MCF 10A (cell line): ENCODE measurements at regions of chr13 and their contacts with region 1.

Region 1: DNA sequence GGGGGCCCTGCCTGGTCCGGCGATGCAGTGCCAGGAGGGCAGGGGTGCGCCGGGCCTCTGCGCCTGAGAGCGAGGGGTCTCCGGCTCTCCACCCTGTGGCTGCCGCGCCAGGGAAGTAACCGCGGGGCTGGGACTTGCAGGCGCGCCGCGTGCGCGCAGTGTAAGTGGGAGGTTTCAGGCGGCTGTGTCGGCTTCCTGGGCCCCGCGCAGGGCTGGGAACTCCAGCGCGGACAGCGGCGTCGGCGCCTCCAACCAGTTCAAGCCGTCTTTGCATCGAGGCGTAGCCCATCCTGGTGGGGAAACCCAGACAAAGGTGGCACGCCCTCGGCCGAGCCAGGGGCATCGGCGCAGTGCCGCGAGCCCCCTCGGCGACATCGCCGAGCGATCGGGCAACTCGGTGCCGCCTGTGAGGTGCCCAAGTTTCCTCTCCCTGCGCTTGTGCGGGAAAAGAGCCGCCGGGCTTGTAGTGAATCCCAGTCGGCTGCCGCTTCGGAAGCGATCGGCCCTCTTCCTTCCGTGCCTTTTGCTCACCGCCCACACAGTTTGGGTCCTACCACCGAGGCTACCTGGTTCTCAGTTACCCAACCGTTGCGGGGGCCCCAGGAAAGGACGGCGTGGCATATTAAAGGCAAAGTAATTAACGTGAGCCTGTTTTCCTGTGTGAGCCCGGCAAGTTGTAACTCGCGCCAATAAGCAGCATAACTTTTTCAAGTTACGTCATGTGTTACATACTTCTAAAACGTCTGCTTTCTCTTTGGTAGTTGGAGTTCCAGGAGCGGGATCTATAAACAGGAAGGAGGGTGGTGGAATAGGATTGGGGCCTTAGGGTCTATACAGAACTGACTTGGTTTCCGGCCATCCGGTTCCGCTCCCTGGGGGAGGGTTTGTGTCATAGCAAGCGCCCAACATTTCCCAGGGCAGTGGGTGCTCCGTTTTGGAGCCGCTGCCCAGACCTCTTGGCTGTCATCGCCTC is 1.2 kb downstream of the LRCH1 start:
- DNase-seq: peak; percentile 81
- H3K4me3 Mint-ChIP-seq: peak overlapping the region; percentile 74
- H3K27ac Mint-ChIP-seq: peak overlapping the region; percentile 82
- H3K4me1 Mint-ChIP-seq: peaks cover 28% of the 10 kb centered on the region
- H3K27me3 Mint-ChIP-seq: no peaks in the 10 kb centered on the region
- CTCF ChIP-seq: no peak

Region 2: GRCh38 chr13:45925151-45925550 is 629.0 kb before region 1 on chr13:
- CTCF ChIA-PET with region 1: no interaction called
- POLR2A ChIA-PET with region 1: no interaction called
- intact Hi-C with region 1: no loop called
- DNase-seq: peak; percentile 13
- H3K4me3 Mint-ChIP-seq: no peak overlapping the region
- H3K27ac Mint-ChIP-seq: no peak overlapping the region
- H3K4me1 Mint-ChIP-seq: peaks cover 6% of the 10 kb centered on the region
- H3K27me3 Mint-ChIP-seq: peaks cover 50% of the 10 kb centered on the region
- CTCF ChIP-seq: no peak

Region 3: DNA sequence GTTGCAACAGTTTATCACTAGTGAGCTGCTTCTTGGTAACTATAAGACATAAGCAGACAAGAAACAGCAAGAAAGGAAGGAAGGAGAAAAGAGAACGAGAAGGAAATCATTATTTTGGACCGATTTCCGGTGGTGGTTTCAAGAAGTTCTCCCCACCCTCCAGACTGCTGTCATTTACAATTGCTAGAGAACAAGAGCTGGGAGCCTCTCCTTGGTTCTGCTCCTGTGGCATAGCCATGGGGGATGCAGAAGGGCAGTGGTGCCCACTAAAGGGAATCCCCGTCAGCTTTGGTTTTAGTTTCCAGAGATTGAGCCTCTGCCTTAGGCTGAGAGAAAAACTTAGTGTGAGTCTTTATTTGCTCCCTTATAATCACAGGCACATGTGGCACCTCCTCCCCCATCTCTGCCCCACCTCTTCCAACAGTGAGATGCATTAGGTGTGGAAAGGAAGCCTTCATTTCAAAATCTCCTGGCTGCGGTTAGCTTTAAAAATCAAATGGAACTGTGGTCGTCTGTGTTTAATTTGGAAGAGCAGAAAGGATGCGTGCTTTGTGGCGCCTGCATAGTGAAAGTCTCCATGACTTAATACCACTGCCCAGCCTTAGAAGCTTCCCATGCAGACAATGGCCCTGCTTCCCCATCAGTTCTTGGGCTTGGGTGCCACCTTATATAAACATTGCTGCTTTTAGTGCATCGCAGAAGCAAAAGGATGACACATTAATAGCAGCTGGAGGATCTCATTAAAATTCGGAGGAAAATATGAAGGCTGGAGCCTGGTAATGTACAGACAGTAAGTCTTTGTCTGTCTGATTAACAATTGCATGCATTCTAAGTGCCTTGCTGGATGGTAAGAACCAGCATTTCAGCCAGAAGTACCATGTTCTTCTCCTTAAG is 23.8 kb after region 1 on chr13:
- CTCF ChIA-PET with region 1: interaction called, 8 read pairs
- POLR2A ChIA-PET with region 1: interaction called, 14 read pairs
- intact Hi-C with region 1: no loop called
- DNase-seq: no peak
- H3K4me3 Mint-ChIP-seq: no peak overlapping the region
- H3K27ac Mint-ChIP-seq: no peak overlapping the region
- H3K4me1 Mint-ChIP-seq: peaks cover 28% of the 10 kb centered on the region
- H3K27me3 Mint-ChIP-seq: no peaks in the 10 kb centered on the region
- CTCF ChIP-seq: no peak

Region 4: DNA sequence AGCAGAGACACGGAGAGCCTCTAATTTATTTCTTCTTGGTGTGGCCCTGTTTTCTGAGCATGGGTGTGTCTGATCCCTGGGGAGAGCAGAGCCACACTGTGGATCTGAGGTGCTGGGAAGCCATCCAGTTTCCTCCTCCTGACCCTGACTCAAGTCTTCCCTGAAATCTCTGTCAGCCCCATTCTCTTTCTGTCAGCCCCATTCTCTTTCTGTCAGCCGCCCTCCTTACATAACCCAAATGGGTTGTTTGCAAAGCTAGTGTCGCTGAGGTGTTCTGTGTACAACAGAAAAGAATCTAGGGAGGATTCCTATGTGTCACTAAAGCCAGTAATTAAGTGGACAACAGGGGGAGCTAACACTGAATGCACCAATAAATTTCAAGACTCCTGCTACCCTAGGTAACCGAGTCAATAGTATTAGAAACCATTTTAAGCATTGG is 49.0 kb after region 1 on chr13:
- CTCF ChIA-PET with region 1: interaction called, 13 read pairs
- POLR2A ChIA-PET with region 1: interaction called, 9 read pairs
- intact Hi-C with region 1: no loop called
- DNase-seq: peak; percentile 29
- H3K4me3 Mint-ChIP-seq: no peak overlapping the region
- H3K27ac Mint-ChIP-seq: peak overlapping the region; percentile 75
- H3K4me1 Mint-ChIP-seq: peaks cover 46% of the 10 kb centered on the region
- H3K27me3 Mint-ChIP-seq: no peaks in the 10 kb centered on the region
- CTCF ChIP-seq: no peak

Region 5: DNA sequence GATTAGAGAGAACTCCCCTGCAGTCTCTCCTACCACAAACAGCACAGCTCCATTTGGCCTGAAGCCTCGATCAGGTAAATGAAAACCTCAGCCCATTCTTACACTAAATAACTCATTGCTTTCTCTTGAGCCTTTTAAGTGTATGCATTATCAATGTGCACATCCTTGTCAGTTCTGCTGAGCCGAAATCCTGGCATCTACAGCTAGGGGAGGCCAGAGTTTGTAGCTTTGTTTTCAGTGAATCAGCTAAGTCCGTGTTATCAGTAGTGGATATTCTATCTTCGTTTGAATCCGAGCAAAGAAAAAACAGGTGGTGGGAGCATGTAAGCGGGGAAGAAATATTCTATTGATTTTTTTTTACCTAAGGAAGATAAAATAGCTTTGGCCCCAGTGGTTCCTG is 158.4 kb after region 1 on chr13:
- CTCF ChIA-PET with region 1: interaction called, 57 read pairs
- POLR2A ChIA-PET with region 1: interaction called, 6 read pairs
- intact Hi-C with region 1: no loop called
- DNase-seq: no peak
- H3K4me3 Mint-ChIP-seq: no peak overlapping the region
- H3K27ac Mint-ChIP-seq: no peak overlapping the region
- H3K4me1 Mint-ChIP-seq: no peaks in the 10 kb centered on the region
- H3K27me3 Mint-ChIP-seq: no peaks in the 10 kb centered on the region
- CTCF ChIP-seq: no peak

Region 6: GRCh38 chr13:46796515-46797474 is 242.6 kb after region 1 on chr13 and contains the start of gene ESD:
- CTCF ChIA-PET with region 1: no interaction called
- POLR2A ChIA-PET with region 1: no interaction called
- intact Hi-C with region 1: loop called (anchors 5 kb)
- DNase-seq: peak; percentile 88
- H3K4me3 Mint-ChIP-seq: peak within 1 kb of the TSS; percentile 94
- H3K27ac Mint-ChIP-seq: peak within 1 kb of the TSS; percentile 97
- H3K4me1 Mint-ChIP-seq: peaks cover 33% of the 10 kb centered on the region
- H3K27me3 Mint-ChIP-seq: no peaks in the 10 kb centered on the region
- CTCF ChIP-seq: no peak
- total RNA-seq, gene ESD: 82.7 and 105 TPM in 2 replicates